ENCODE measurements at regions of chr1 and their contacts with region 1.

Region 1: DNA sequence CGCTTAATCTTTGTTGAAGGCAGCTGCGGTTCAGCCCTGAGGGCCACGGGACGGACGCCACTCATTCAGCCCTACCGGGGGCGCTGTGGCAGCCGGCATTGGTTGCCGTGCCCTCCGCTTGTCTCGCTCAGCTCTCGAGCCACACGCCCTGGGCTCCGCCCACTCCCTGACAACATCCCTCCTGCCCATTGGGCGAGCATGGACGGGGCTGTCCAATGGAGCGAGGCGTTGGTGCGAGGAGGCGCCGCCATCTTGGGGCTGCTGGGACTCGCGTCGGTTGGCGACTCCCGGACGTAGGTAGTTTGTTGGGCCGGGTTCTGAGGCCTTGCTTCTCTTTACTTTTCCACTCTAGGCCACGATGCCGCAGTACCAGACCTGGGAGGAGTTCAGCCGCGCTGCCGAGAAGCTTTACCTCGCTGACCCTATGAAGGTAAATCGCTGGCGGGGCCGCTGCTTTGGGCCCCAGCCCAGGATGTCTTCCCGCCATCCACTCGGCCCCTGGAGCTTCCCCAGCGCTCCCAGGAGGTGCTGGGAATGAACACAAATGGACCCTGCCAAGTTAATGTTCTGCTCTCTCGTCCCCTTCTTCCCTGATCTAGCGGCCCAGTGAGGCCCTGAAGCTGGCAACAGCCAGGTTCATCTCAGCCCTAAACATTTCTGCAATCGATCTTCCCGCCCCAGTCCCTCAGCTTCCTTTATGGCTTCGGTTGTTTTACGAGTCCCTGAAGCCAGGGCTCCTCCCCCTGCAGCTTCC is at the start of gene SRP9:
- DNase-seq: peak; percentile 99
- H3K4me3 ChIP-seq: peak within 1 kb of the TSS; percentile 51 to 77 (median 74)
- H3K27ac ChIP-seq: peak within 1 kb of the TSS; percentile 95 to 98 (median 97)
- H3K4me1 ChIP-seq: peaks cover 2 to 57% (median 42%) of the 10 kb centered on the region in 4 donors
- H3K27me3 ChIP-seq: no peaks in the 10 kb centered on the region
- CTCF ChIP-seq: peak; percentile 68 to 97 (median 88)
- EP300 ChIP-seq: no peak
- POLR2A ChIP-seq: peak; percentile 92
- total RNA-seq, gene SRP9: 42.3 to 208 (median 117) TPM

Region 2: DNA sequence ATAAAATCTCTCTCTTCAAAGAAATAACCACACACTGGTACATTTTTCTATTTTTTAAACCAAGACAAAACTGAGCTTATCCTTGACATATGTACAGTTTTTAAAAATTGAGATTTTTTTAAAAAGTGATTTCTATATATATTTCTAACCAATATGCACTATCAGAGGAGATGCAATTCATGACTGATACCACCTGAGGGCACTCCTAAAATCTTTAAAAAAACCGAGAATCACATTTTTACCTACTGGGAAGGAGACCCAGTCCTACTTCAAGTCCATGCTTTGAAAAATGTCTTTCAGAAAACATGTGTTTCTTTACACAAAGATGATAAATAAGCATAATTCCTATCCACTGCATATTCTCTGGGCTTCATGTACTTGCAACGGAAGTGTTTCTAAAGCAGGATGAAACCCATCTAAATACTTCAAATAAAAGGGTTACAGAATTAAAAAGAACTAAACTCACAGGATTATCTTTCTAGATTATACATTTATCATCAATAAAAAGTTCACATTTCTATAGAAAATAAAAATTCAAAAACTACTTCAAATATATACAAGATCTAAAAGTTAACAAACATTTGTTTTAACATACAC is 223.4 kb before region 1 on chr1:
- in situ Hi-C with region 1: no loop called
- intact Hi-C with region 1: loop called (anchors 10 kb)
- DNase-seq: no peak
- H3K4me3 ChIP-seq: no peak overlapping the region
- H3K27ac ChIP-seq: no peak overlapping the region
- H3K4me1 ChIP-seq: no peaks in the 10 kb centered on the region
- H3K27me3 ChIP-seq: no peaks in the 10 kb centered on the region
- CTCF ChIP-seq: peak; percentile 44 to 66 (median 57)
- EP300 ChIP-seq: no peak
- POLR2A ChIP-seq: no peak

Region 3: GRCh38 chr1:225809842-225810578 is 32.2 kb after region 1 on chr1 and contains the start of gene EPHX1:
- in situ Hi-C with region 1: no loop called
- intact Hi-C with region 1: loop called (anchors 5 kb)
- DNase-seq: peak; percentile 94
- H3K4me3 ChIP-seq: peak within 1 kb of the TSS; percentile 41 to 89 (median 75)
- H3K27ac ChIP-seq: peak within 1 kb of the TSS; percentile 87 to 95 (median 90)
- H3K4me1 ChIP-seq: peaks cover 19 to 55% (median 42%) of the 10 kb centered on the region in 4 donors
- H3K27me3 ChIP-seq: no peaks in the 10 kb centered on the region
- CTCF ChIP-seq: peak; percentile 26 to 37 (median 29)
- EP300 ChIP-seq: no peak
- POLR2A ChIP-seq: peak; percentile 77
- total RNA-seq, gene EPHX1: 56.9 to 114 (median 90.6) TPM

Region 4: GRCh38 chr1:225911191-225912130 is 133.7 kb after region 1 on chr1:
- in situ Hi-C with region 1: loop called in 2 of 4 experiments (anchors 10 to 25 kb)
- intact Hi-C with region 1: loop called (anchors 10 kb)
- DNase-seq: peak; percentile 73
- H3K4me3 ChIP-seq: peak overlapping the region in 2 of 4 donors; percentile 6 to 23
- H3K27ac ChIP-seq: peak overlapping the region in 2 of 4 donors; percentile 33 to 37
- H3K4me1 ChIP-seq: peaks cover 0 to 18% (median 13%) of the 10 kb centered on the region in 4 donors
- H3K27me3 ChIP-seq: no peaks in the 10 kb centered on the region
- CTCF ChIP-seq: peak; percentile 93 to 97 (median 97)
- EP300 ChIP-seq: no peak
- POLR2A ChIP-seq: no peak

Measured in transverse colon (tissue), 4 donors.